GM12878 (cell line): ENCODE measurements at regions of chr4 and their contacts with region 1.

Region 1: GRCh38 chr4:62399242-62399641 is 1199.1 kb downstream of the ADGRL3 start:
- DNase-seq: no peak
- ATAC-seq: peak; percentile 86
- H3K4me3 ChIP-seq: no peak overlapping the region
- H3K27ac ChIP-seq: no peak overlapping the region
- H3K4me1 ChIP-seq: no peaks in the 10 kb centered on the region
- H3K27me3 ChIP-seq: no peaks in the 10 kb centered on the region
- CTCF ChIP-seq: no peak
- EP300 ChIP-seq: no peak
- POLR2A ChIP-seq: no peak
- RAD21 ChIP-seq: no peak

Region 2: DNA sequence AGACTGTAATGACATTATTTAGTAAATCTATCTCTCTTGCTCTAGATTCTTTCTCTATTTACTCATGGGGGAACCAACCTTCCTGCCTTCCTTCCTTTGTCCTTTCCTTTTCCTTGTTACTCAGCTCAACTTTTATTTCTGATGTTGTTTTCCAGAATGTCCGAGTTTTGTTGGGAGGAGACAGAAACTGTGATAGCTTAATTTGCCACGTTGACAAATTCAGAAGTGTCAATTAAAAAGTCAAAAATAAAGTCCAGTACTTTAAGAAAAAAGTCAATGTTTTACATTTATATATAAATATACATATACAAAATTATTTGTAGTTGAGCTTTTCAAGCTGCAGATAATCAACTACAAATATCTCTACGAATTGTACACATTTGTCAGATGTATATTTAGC is 11.4 kb before region 1 on chr4:
- CTCF ChIA-PET with region 1: no interaction called
- POLR2A ChIA-PET with region 1: interaction called, 3 read pairs
- RAD21 ChIA-PET with region 1: interaction called, 3 read pairs
- SMC1A ChIA-PET with region 1: interaction called, 12 read pairs
- in situ Hi-C with region 1: no loop called
- intact Hi-C with region 1: no loop called
- DNase-seq: no peak
- ATAC-seq: no peak
- H3K4me3 ChIP-seq: no peak overlapping the region
- H3K27ac ChIP-seq: no peak overlapping the region
- H3K4me1 ChIP-seq: no peaks in the 10 kb centered on the region
- H3K27me3 ChIP-seq: no peaks in the 10 kb centered on the region
- CTCF ChIP-seq: no peak
- EP300 ChIP-seq: no peak
- POLR2A ChIP-seq: no peak
- RAD21 ChIP-seq: no peak